ENCODE measurements at regions of chr7 and their contacts with region 1.

Region 1: DNA sequence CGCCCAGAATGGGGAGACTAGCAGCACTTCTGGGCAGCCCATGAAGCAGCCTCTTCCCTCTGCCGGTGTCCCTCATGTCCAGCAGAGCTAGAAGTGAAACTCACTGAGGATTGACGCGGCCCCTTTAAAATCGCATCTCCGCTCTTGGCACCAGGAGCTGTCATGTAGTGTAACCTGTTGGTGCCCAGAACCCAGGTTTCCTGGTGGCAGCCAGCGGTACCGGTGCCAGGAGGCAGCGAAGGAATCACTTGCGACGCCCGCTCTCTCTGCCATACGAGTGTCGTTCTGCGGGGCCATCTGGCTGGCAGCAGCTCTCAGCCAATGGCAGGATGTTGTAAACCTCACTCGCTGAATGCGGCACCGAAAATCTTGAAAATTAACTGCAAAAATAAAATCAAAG is 82.7 kb downstream of the CUX1 start:
- DNase-seq: peak; percentile 78 to 94
- ATAC-seq: peak; percentile 63 to 86
- H3K4me3 ChIP-seq: peak overlapping the region; percentile 21 to 59 (median 48)
- H3K27ac ChIP-seq: peak overlapping the region; percentile 80 to 91 (median 84)
- H3K4me1 ChIP-seq: peaks cover 72 to 81% of the 10 kb centered on the region in 2 donors
- H3K27me3 ChIP-seq: no peaks in the 10 kb centered on the region
- CTCF ChIP-seq: peak in 4 of 5 experiments; percentile 21 to 46 (median 34)
- POLR2A ChIP-seq: peak; percentile 40 to 51

Region 2: GRCh38 chr7:101859411-101860106 is 40.5 kb before region 1 on chr7:
- in situ Hi-C with region 1: no loop called
- intact Hi-C with region 1: no loop called
- DNase-seq: no peak
- ATAC-seq: no peak
- H3K4me3 ChIP-seq: no peak overlapping the region
- H3K27ac ChIP-seq: peak overlapping the region; percentile 84 to 93 (median 91)
- H3K4me1 ChIP-seq: peaks cover 82 to 93% of the 10 kb centered on the region in 2 donors
- H3K27me3 ChIP-seq: no peaks in the 10 kb centered on the region
- CTCF ChIP-seq: no peak
- POLR2A ChIP-seq: no peak

Region 3: DNA sequence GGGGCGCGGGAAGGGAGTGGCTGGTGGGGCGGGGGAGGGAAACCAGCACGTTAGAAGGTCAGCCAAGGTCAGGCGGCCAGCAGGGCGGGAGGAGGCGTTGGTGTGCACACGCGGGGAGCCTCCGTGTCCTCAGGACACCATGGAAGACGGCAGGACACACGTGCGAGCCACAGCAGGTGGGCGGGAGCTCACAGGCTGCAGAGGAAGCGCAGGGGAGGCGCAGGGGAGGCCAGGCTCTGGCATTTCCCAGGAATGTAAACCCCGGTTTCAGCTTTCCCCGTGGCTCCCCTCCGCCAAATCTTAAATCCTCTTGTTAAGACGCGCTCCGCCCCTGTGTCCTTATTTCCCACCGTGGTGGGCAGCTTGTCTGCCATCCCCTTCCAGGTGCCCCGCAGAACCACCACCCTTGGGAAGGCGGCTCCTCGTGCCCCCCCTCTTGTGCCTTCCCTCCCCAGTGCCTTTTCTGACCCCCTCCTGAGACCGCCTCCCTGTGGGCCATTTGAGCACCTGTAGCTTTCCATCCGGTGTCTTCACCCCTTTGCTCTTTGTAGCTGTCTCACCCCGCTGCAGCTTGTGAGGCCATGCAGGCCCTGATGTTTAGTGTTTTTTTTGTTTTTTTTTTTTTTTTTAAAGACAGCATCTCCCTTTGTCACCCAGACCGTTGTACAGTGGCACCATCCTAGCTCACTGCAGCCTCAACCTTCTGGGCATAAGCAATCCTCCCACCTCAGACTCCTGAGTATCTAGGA is 30.4 kb before region 1 on chr7:
- in situ Hi-C with region 1: no loop called
- intact Hi-C with region 1: loop called (anchors 2 kb)
- DNase-seq: peak in 1 of 2 donors; percentile 49
- ATAC-seq: peak in 1 of 2 donors; percentile 25
- H3K4me3 ChIP-seq: no peak overlapping the region
- H3K27ac ChIP-seq: peak overlapping the region; percentile 84 to 93 (median 91)
- H3K4me1 ChIP-seq: peaks cover 58 to 78% of the 10 kb centered on the region in 2 donors
- H3K27me3 ChIP-seq: no peaks in the 10 kb centered on the region
- CTCF ChIP-seq: no peak
- POLR2A ChIP-seq: no peak

Region 4: DNA sequence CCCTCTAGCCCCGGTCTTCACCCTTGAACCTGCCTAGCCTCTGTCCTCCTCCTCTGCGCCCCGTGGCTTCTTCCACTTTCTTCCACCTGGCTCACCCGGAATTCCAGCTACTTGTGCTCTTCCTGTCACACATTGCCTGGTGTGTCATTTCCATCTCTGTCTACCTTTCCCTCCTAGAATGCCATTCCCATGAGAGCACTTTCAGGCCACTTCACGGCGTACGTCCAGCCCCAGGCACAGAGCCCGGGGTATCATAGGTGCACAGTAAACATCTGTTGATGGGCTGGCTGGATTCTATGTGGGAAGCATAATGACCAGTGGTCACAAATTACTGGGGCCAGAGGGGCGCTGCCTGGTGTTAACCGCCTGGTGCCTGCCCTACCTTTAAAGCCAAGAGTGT is 78.6 kb after region 1 on chr7:
- in situ Hi-C with region 1: no loop called
- intact Hi-C with region 1: no loop called
- DNase-seq: no peak
- ATAC-seq: no peak
- H3K4me3 ChIP-seq: no peak overlapping the region
- H3K27ac ChIP-seq: no peak overlapping the region
- H3K4me1 ChIP-seq: peaks cover 20 to 29% of the 10 kb centered on the region in 2 donors
- H3K27me3 ChIP-seq: no peaks in the 10 kb centered on the region
- CTCF ChIP-seq: no peak
- POLR2A ChIP-seq: no peak

Measured in gastrocnemius medialis (tissue), 4 donors.